PC-3 (cell line): ENCODE measurements at regions of chr4 and their contacts with region 1.

Region 1: GRCh38 chr4:87093443-87094123 is 126.8 kb downstream of the KLHL8 start:
- DNase-seq: peak; percentile 72
- ATAC-seq: peak; percentile 39
- H3K4me3 ChIP-seq: peak overlapping the region; percentile 28; the same call in 1 of the 2 replicates
- H3K27ac ChIP-seq: peak overlapping the region; percentile 87
- H3K4me1 ChIP-seq: peaks cover 41% of the 10 kb centered on the region
- H3K27me3 ChIP-seq: no peaks in the 10 kb centered on the region
- CTCF ChIP-seq: peak; percentile 69

Region 2: GRCh38 chr4:86921608-86922252 is 171.9 kb before region 1 on chr4:
- CTCF ChIA-PET with region 1: interaction called, 9 read pairs
- POLR2A ChIA-PET with region 1: interaction called, 3 read pairs
- intact Hi-C with region 1: loop called (anchors 1 kb)
- DNase-seq: no peak
- ATAC-seq: no peak
- H3K4me3 ChIP-seq: no peak overlapping the region
- H3K27ac ChIP-seq: no peak overlapping the region
- H3K4me1 ChIP-seq: peaks cover 4% of the 10 kb centered on the region
- H3K27me3 ChIP-seq: no peaks in the 10 kb centered on the region
- CTCF ChIP-seq: no peak

Region 3: GRCh38 chr4:86934771-86935565 is 158.6 kb before region 1 on chr4 and contains the start of gene AFF1:
- CTCF ChIA-PET with region 1: interaction called, 9 read pairs
- POLR2A ChIA-PET with region 1: interaction called, 13 read pairs
- intact Hi-C with region 1: loop called (anchors 5 kb)
- DNase-seq: peak; percentile 89
- ATAC-seq: peak; percentile 70
- H3K4me3 ChIP-seq: peak within 1 kb of the TSS; percentile 83
- H3K27ac ChIP-seq: peak within 1 kb of the TSS; percentile 87
- H3K4me1 ChIP-seq: peaks cover 29% of the 10 kb centered on the region
- H3K27me3 ChIP-seq: no peaks in the 10 kb centered on the region
- CTCF ChIP-seq: no peak
- total RNA-seq, gene AFF1: 8.1 and 9.4 TPM in 2 replicates

Region 4: GRCh38 chr4:87060957-87061356 is 32.6 kb before region 1 on chr4:
- CTCF ChIA-PET with region 1: interaction called, 3 read pairs
- POLR2A ChIA-PET with region 1: no interaction called
- intact Hi-C with region 1: loop called (anchors 2 kb)
- DNase-seq: peak; percentile 88
- ATAC-seq: peak; percentile 93
- H3K4me3 ChIP-seq: peak overlapping the region; percentile 12; the same call in 1 of the 2 replicates
- H3K27ac ChIP-seq: peak overlapping the region; percentile 85
- H3K4me1 ChIP-seq: peaks cover 50% of the 10 kb centered on the region
- H3K27me3 ChIP-seq: no peaks in the 10 kb centered on the region
- CTCF ChIP-seq: no peak

Region 5: DNA sequence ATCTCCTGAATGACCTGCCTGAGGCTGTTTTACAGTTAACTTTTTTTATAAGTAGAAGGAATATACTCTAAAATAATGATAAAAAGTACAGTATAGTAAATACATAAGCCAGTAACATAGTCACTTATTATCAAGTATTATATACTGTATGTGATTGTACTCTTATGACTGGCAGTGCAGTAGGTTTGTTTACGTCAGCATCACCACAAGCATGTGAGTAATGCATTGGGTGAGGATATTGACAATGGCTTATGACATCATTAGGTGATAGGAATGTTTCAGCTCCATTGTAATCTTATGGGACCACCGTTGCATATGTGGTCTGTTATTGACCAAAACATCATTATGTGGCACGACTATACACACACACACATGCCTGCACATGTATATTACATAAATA is 349.3 kb after region 1 on chr4:
- CTCF ChIA-PET with region 1: no interaction called
- POLR2A ChIA-PET with region 1: no interaction called
- intact Hi-C with region 1: no loop called
- DNase-seq: no peak
- ATAC-seq: no peak
- H3K4me3 ChIP-seq: no peak overlapping the region
- H3K27ac ChIP-seq: no peak overlapping the region
- H3K4me1 ChIP-seq: no peaks in the 10 kb centered on the region
- H3K27me3 ChIP-seq: no peaks in the 10 kb centered on the region
- CTCF ChIP-seq: no peak